ENCODE measurements at regions of chr6 and their contacts with region 1.

Region 1: GRCh38 chr6:150417899-150418826 is 49.4 kb downstream of the IYD start:
- DNase-seq: peak; percentile 28
- H3K4me3 Mint-ChIP-seq: peak overlapping the region; percentile 50
- H3K27ac Mint-ChIP-seq: peak overlapping the region; percentile 67
- H3K4me1 Mint-ChIP-seq: peaks cover 30% of the 10 kb centered on the region
- H3K27me3 Mint-ChIP-seq: peaks cover 24% of the 10 kb centered on the region

Region 2: GRCh38 chr6:150220634-150221551 is 197.3 kb before region 1 on chr6:
- CTCF ChIA-PET with region 1: no interaction called
- POLR2A ChIA-PET with region 1: no interaction called
- intact Hi-C with region 1: no loop called
- DNase-seq: no peak
- H3K4me3 Mint-ChIP-seq: no peak overlapping the region
- H3K27ac Mint-ChIP-seq: no peak overlapping the region
- H3K4me1 Mint-ChIP-seq: no peaks in the 10 kb centered on the region
- H3K27me3 Mint-ChIP-seq: peaks cover 15% of the 10 kb centered on the region

Region 3: GRCh38 chr6:150238336-150238741 is 179.8 kb before region 1 on chr6:
- CTCF ChIA-PET with region 1: no interaction called
- POLR2A ChIA-PET with region 1: no interaction called
- intact Hi-C with region 1: no loop called
- DNase-seq: no peak
- H3K4me3 Mint-ChIP-seq: no peak overlapping the region
- H3K27ac Mint-ChIP-seq: no peak overlapping the region
- H3K4me1 Mint-ChIP-seq: peaks cover 36% of the 10 kb centered on the region
- H3K27me3 Mint-ChIP-seq: peaks cover 6% of the 10 kb centered on the region

Region 4: GRCh38 chr6:150491131-150491810 is 73.1 kb after region 1 on chr6:
- CTCF ChIA-PET with region 1: interaction called, 12 read pairs
- POLR2A ChIA-PET with region 1: no interaction called
- intact Hi-C with region 1: loop called (anchors 5 kb)
- DNase-seq: peak; percentile 35
- H3K4me3 Mint-ChIP-seq: no peak overlapping the region
- H3K27ac Mint-ChIP-seq: peak overlapping the region; percentile 73
- H3K4me1 Mint-ChIP-seq: peaks cover 25% of the 10 kb centered on the region
- H3K27me3 Mint-ChIP-seq: no peaks in the 10 kb centered on the region

Region 5: GRCh38 chr6:150600301-150601017 is 182.3 kb after region 1 on chr6:
- CTCF ChIA-PET with region 1: interaction called, 17 read pairs
- POLR2A ChIA-PET with region 1: interaction called, 8 read pairs
- intact Hi-C with region 1: loop called (anchors 1 kb)
- DNase-seq: peak; percentile 89
- H3K4me3 Mint-ChIP-seq: peak overlapping the region; percentile 84
- H3K27ac Mint-ChIP-seq: peak overlapping the region; percentile 88
- H3K4me1 Mint-ChIP-seq: peaks cover 19% of the 10 kb centered on the region
- H3K27me3 Mint-ChIP-seq: peaks cover 48% of the 10 kb centered on the region

Region 6: GRCh38 chr6:150632785-150633485 is 214.8 kb after region 1 on chr6:
- CTCF ChIA-PET with region 1: interaction called, 5 read pairs
- POLR2A ChIA-PET with region 1: no interaction called
- intact Hi-C with region 1: loop called (anchors 5 kb)
- DNase-seq: peak; percentile 17
- H3K4me3 Mint-ChIP-seq: peak overlapping the region; percentile 71
- H3K27ac Mint-ChIP-seq: peak overlapping the region; percentile 68
- H3K4me1 Mint-ChIP-seq: peaks cover 45% of the 10 kb centered on the region
- H3K27me3 Mint-ChIP-seq: peaks cover 12% of the 10 kb centered on the region

Region 7: DNA sequence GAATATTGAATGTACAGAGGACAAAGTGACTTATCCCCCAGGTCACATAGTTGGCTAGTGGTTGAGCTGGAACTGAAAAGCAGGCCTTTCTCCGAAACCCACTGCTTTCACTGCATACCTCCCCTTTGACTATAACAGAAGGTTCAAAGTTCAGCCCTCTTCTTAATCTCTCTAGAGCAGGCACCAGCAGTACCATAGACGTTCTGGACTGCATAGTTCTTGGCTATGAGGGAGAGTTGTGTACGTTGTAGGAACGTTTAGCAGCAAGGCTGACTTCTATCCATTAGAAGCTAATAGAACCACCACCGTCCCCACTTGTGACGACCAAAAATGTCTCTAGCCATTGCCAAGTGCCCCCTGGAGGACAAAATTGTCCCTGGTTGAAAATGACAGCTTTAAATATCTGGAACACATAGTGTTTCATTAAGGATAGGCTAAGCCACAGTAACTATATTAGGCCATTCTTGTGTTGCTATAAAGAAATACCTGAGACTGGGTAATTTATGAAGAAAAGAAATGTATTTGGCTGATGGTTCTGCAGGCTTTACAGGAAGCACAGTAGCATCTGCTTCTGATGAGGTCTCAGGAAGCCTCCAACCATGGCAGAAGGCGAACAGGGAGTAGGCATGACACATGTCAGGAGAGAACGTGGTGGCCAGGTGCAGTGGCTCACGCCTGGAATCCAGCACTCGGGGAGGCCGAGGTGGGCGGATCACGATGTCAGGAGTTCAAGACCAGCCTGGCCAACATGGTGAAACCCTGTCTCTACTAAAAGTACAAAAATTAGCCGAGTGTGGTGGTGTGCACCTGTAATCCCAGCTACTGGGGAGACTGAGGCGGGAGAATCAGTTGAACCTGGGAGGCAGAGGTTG is 323.7 kb after region 1 on chr6:
- CTCF ChIA-PET with region 1: interaction called, 19 read pairs
- POLR2A ChIA-PET with region 1: no interaction called
- intact Hi-C with region 1: loop called (anchors 1 kb)
- DNase-seq: peak; percentile 12
- H3K4me3 Mint-ChIP-seq: no peak overlapping the region
- H3K27ac Mint-ChIP-seq: no peak overlapping the region
- H3K4me1 Mint-ChIP-seq: no peaks in the 10 kb centered on the region
- H3K27me3 Mint-ChIP-seq: peaks cover 2% of the 10 kb centered on the region

Region 8: DNA sequence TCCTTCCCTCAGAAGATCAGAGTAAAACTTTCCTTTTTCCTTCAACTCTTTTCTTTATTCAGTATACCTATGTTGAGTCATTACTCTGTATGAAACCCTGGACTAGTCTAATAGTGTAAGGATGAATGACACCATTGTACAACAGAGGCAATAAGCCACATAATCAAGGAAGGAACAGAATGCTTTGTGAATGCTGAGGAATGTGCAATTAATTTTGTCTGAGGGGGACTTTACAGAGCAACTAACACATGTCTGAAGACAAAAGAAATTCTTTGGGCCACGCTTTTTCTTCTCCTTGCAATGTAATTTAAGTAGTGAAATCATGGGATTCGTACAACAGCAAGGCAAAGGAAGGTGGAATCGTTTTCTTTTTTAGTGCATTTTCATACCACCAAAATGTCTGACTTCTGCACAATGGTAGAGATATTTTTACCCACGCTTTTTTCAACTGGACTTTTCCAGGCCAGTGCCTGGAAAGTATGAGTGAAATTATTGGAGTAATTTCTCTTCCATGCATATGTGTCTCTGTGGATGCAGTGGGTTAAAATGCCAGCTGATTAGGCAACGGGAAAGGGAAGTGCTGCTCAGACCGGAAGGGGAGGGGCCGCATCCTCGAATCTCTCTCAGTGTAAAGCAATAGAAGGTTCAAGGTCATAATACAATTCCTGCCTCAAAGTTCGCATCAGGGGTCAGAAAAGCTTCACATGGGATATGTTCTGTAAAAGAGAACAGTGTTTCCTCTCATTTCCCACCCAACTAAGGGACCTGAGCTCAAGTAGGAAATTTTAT is 357.4 kb after region 1 on chr6:
- CTCF ChIA-PET with region 1: no interaction called
- POLR2A ChIA-PET with region 1: no interaction called
- intact Hi-C with region 1: no loop called
- DNase-seq: no peak
- H3K4me3 Mint-ChIP-seq: no peak overlapping the region
- H3K27ac Mint-ChIP-seq: no peak overlapping the region
- H3K4me1 Mint-ChIP-seq: peaks cover 4% of the 10 kb centered on the region
- H3K27me3 Mint-ChIP-seq: no peaks in the 10 kb centered on the region

Region 9: DNA sequence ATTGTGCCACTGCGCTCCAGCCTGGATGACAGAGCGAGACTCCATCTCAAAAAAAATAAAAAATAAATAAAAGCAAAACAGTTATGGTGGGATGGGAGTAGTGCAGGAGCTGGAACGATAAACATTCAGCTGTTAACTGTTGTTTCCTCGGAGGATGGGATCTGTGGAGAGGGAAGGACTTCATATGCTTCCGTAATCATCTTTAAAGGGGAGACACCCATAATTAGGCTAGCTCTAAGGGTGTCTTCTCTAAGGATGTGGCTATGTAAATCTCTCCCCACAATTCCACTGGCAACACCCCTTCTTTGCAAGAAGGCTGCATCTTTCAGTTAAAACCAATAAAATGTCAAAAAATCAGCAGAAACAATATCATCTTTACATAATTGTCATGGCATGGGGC is 404.8 kb after region 1 on chr6:
- CTCF ChIA-PET with region 1: interaction called, 99 read pairs
- POLR2A ChIA-PET with region 1: no interaction called
- intact Hi-C with region 1: no loop called
- DNase-seq: no peak
- H3K4me3 Mint-ChIP-seq: no peak overlapping the region
- H3K27ac Mint-ChIP-seq: no peak overlapping the region
- H3K4me1 Mint-ChIP-seq: no peaks in the 10 kb centered on the region
- H3K27me3 Mint-ChIP-seq: no peaks in the 10 kb centered on the region

Measured in activated CD4-positive, alpha-beta memory T cell treated with anti-CD3 and anti-CD28 coated beads for 36 hours (primary cell).